Head of caudate nucleus (tissue), 42 donors: ENCODE measurements at regions of chr12 and their contacts with region 1.

Region 1: DNA sequence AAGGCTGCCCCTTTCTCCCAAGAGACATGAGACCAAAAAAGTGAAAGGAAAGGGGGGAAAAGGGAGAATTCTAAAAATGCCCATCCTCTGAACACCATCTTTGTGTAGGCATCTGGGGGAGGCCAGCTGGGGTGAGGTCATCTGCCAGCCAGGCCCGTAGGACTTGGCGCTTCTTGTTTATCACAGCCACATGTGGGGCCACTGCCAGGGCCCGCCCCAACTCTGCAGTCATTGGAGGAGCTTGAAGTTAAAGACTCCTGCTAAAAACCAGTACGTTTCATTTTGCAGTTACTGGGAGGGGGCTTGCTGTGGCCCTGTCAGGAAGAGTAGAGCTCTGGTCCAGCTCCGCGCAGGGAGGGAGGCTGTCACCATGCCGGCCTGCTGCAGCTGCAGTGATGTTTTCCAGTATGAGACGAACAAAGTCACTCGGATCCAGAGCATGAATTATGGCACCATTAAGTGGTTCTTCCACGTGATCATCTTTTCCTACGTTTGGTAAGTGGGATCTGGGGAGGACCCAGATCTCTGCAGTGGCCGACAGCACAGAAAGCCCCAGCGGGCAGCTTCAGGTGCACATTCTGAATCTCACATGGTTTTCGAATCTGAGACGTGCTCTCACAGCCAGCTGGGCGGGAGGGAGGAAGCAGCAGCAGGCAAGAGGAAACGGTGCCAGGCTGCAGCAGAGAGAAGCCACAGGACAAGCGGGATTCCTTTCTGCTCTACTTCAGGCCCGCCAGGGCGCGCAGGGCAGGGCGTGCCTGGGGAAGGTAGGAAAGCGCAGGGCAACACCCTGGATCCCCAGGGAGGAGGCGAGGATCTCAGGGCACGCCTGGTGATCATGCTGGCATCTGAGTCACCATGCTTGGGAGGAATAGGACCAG is at the start of gene P2RX7:
- DNase-seq: peak; percentile 89 to 99 (median 96)

Region 2: DNA sequence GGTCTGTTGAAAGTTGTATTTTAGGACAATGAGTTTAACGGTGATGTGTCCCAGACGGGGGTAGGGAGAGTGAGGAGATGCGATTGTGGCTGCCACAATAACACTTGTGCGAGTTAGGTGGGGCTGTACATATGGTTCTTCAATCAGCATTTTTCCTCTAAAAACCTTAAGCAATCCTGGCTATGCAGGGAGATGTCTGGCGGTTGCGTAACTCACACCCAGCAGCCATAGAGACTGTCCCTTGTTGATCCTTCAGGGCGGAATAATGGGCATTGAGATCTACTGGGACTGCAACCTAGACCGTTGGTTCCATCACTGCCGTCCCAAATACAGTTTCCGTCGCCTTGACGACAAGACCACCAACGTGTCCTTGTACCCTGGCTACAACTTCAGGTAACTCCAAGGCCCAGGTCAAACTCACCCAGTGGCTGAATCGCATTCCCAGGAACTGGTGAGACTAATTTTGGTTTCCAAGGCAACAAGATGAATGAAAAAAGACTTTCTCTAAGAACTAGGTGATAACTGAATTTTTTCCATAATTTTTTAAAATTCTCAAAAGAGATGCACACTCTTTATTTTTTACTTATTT is 34.5 kb after region 1 on chr12:
- intact Hi-C with region 1: no loop called
- DNase-seq: no peak

Region 3: GRCh38 chr12:121209624-121210572 is 77.1 kb after region 1 on chr12 and contains the start of gene P2RX4:
- intact Hi-C with region 1: loop called (anchors 5 kb)
- DNase-seq: peak; percentile 75 to 95 (median 87)